ENCODE measurements at regions of chr17 and their contacts with region 1.

Region 1: DNA sequence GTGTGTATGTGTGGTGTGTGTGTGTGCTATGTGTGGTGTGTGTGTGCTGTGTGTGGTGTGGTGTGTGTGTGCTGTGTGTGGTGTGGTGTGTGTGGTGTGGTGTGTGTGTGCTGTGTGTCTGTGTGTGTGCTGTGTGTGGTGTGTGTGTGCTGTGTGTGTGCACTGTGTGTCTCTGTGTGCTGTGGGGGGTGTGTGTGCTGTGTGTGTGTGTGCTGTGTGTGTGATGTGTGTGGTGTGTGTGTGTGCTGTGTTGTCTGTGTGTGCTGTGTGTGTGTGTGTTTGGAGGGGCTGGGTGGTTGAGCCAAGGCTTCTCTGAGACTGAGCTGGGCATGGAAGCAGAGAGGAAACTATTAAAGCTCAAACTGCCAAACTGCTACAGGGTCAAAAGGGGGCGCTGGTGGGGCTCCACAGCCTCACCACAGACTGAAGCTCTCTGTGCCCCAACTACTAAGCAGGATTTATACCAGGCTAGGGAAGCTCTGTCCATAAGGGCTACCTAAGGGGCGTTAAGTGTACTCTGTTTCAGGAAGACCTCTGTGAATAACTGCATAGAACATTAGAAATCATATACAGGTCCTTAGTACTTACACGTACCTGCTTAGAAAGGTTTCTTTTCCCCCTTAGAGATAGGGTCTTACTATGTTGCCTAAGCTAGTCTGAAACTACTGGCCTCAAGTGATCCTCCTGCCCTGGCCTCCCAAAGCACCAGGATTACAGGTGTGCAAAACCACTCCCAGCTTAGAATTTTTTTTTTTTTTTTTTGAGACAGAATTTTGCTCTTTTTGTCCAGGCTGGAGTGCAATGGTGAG is 27.8 kb upstream of the GHDC start:
- DNase-seq: peak; percentile 58
- ATAC-seq: peak; percentile 97
- H3K4me3 ChIP-seq: no peak overlapping the region
- H3K27ac ChIP-seq: no peak overlapping the region
- H3K4me1 ChIP-seq: no peaks in the 10 kb centered on the region
- H3K27me3 ChIP-seq: no peaks in the 10 kb centered on the region
- CTCF ChIP-seq: peak; percentile 77
- POLR2A ChIP-seq: no peak
- RAD21 ChIP-seq: peak; percentile 81

Region 2: GRCh38 chr17:41937970-41938954 is 283.9 kb before region 1 on chr17:
- CTCF ChIA-PET with region 1: no interaction called
- POLR2A ChIA-PET with region 1: no interaction called
- dilution Hi-C with region 1: no loop called
- in situ Hi-C with region 1: no loop called
- intact Hi-C with region 1: no loop called
- DNase-seq: no peak
- ATAC-seq: no peak
- H3K4me3 ChIP-seq: no peak overlapping the region
- H3K27ac ChIP-seq: no peak overlapping the region
- H3K4me1 ChIP-seq: no peaks in the 10 kb centered on the region
- H3K27me3 ChIP-seq: no peaks in the 10 kb centered on the region
- CTCF ChIP-seq: no peak
- POLR2A ChIP-seq: no peak
- RAD21 ChIP-seq: no peak

Region 3: DNA sequence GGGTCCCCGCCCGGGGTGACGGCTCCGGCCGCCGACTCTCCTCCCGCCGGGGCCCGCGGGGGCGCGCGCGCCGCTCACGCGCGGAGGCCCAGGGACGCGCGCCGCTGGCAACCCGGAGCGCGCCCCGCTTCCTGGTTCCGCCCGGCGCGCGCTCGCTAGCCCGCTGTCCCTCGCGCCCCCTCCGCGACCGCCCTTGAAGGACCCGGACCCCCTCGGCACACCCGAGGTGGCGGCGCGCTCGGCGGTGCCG is 54.1 kb after region 1 on chr17 and contains the start of gene STAT5B:
- CTCF ChIA-PET with region 1: interaction called, 3 read pairs
- POLR2A ChIA-PET with region 1: no interaction called
- dilution Hi-C with region 1: no loop called
- in situ Hi-C with region 1: no loop called
- intact Hi-C with region 1: loop called (anchors 5 kb)
- DNase-seq: peak; percentile 55
- ATAC-seq: peak; percentile 82
- H3K4me3 ChIP-seq: peak within 1 kb of the TSS; percentile 77
- H3K27ac ChIP-seq: peak within 1 kb of the TSS; percentile 76
- H3K4me1 ChIP-seq: peaks cover 3% of the 10 kb centered on the region
- H3K27me3 ChIP-seq: no peaks in the 10 kb centered on the region
- CTCF ChIP-seq: no peak
- POLR2A ChIP-seq: no peak
- RAD21 ChIP-seq: no peak
- total RNA-seq, gene STAT5B: 21.7 and 24.4 TPM in 2 replicates

Region 4: GRCh38 chr17:42311240-42312034 is 89.3 kb after region 1 on chr17:
- CTCF ChIA-PET with region 1: interaction called, 4 read pairs
- POLR2A ChIA-PET with region 1: no interaction called
- dilution Hi-C with region 1: no loop called
- in situ Hi-C with region 1: no loop called
- intact Hi-C with region 1: loop called (anchors 2 kb)
- DNase-seq: peak; percentile 94
- ATAC-seq: peak; percentile 91
- H3K4me3 ChIP-seq: no peak overlapping the region
- H3K27ac ChIP-seq: peak overlapping the region; percentile 45
- H3K4me1 ChIP-seq: peaks cover 11% of the 10 kb centered on the region
- H3K27me3 ChIP-seq: no peaks in the 10 kb centered on the region
- CTCF ChIP-seq: no peak
- POLR2A ChIP-seq: no peak
- RAD21 ChIP-seq: no peak

Measured in IMR-90 (cell line).